GM12878 (cell line): ENCODE measurements at regions of chr6 and their contacts with region 1.

Region 1: GRCh38 chr6:7086488-7086887 is 21.3 kb upstream of the RREB1 start:
- DNase-seq: peak; percentile 66
- ATAC-seq: peak; percentile 86
- H3K4me3 ChIP-seq: peak overlapping the region; percentile 48
- H3K27ac ChIP-seq: peak overlapping the region; percentile 38
- H3K4me1 ChIP-seq: peaks cover 18% of the 10 kb centered on the region
- H3K27me3 ChIP-seq: no peaks in the 10 kb centered on the region
- CTCF ChIP-seq: peak in 2 of 3 experiments; percentile 43 to 44; a peak in 3 of 6 replicates
- EP300 ChIP-seq: 0 out of 4 replicates have a peak, but pooled peaks of 1 of the 2 experiments have one; percentile 9
- POLR2A ChIP-seq: no peak
- RAD21 ChIP-seq: peak; percentile 72

Region 2: GRCh38 chr6:6724539-6725467 is 361.7 kb before region 1 on chr6:
- CTCF ChIA-PET with region 1: no interaction called
- POLR2A ChIA-PET with region 1: no interaction called
- RAD21 ChIA-PET with region 1: interaction called, 10 read pairs
- SMC1A ChIA-PET with region 1: interaction called, 10 read pairs
- in situ Hi-C with region 1: no loop called
- intact Hi-C with region 1: no loop called
- DNase-seq: no peak
- ATAC-seq: peak; percentile 91
- H3K4me3 ChIP-seq: peak overlapping the region; percentile 37; the same call in 1 of the 2 replicates
- H3K27ac ChIP-seq: no peak overlapping the region
- H3K4me1 ChIP-seq: peaks cover 11% of the 10 kb centered on the region
- H3K27me3 ChIP-seq: no peaks in the 10 kb centered on the region
- CTCF ChIP-seq: peak; percentile 65 to 82 (median 70)
- EP300 ChIP-seq: no peak
- POLR2A ChIP-seq: no peak
- RAD21 ChIP-seq: peak; percentile 87

Region 3: DNA sequence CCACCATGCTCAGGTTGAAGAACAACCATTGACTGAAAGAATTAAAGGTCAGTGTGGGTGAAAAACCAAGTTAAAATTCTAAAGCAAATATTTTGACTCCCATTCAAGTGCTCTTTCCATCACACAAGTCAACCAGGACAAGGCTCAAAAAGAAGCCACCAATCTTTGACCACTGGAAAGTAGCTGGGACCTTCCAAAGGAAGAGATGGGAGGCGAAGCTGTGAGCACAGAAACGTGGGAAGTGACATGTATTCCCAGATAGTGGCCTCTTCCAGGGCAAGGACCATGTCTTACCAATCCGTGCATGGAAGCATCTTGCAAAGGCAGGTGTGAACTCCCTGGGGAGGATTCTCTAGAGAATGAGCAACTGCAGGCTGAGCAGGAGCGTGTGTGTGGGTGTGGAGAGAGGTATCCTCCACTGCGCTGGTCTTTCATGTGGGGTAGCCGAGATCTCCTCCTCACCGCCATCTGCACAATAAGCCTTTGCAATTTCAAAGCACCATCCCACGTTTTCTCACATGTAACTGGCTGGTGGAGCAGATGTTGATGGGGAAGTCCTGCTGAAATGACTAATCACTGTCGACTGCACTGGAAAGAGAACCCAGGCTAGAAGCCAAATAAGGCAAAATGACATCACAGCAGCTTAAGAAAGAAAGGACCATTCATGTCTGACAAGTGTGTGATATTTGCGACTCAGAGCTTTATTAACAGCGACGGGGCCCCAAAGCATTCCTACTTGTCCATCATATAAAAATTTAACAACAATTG is 168.1 kb before region 1 on chr6:
- CTCF ChIA-PET with region 1: interaction called, 4 read pairs
- POLR2A ChIA-PET with region 1: no interaction called
- RAD21 ChIA-PET with region 1: interaction called, 8 read pairs
- SMC1A ChIA-PET with region 1: interaction called, 7 read pairs
- in situ Hi-C with region 1: no loop called
- intact Hi-C with region 1: loop called (anchors 2 kb)
- DNase-seq: peak; percentile 91
- ATAC-seq: peak; percentile 96
- H3K4me3 ChIP-seq: no peak overlapping the region
- H3K27ac ChIP-seq: peak overlapping the region; percentile 30; the same call in 1 of the 2 replicates
- H3K4me1 ChIP-seq: peaks cover 27% of the 10 kb centered on the region
- H3K27me3 ChIP-seq: no peaks in the 10 kb centered on the region
- CTCF ChIP-seq: no peak
- EP300 ChIP-seq: peak; percentile 99
- POLR2A ChIP-seq: no peak
- RAD21 ChIP-seq: peak; percentile 31; the same call in 1 of the 2 replicates

Region 4: GRCh38 chr6:7107578-7108195 is 21.2 kb after region 1 on chr6 and contains the start of gene RREB1:
- CTCF ChIA-PET with region 1: interaction called, 11 read pairs
- POLR2A ChIA-PET with region 1: interaction called, 7 read pairs
- RAD21 ChIA-PET with region 1: interaction called, 24 read pairs
- SMC1A ChIA-PET with region 1: interaction called, 28 read pairs
- in situ Hi-C with region 1: no loop called
- intact Hi-C with region 1: no loop called
- DNase-seq: no peak
- ATAC-seq: peak; percentile 76
- H3K4me3 ChIP-seq: peak within 1 kb of the TSS; percentile 97
- H3K27ac ChIP-seq: peak within 1 kb of the TSS; percentile 94
- H3K4me1 ChIP-seq: peaks cover 5% of the 10 kb centered on the region
- H3K27me3 ChIP-seq: no peaks in the 10 kb centered on the region
- CTCF ChIP-seq: no peak
- EP300 ChIP-seq: no peak
- POLR2A ChIP-seq: peak; percentile 33
- RAD21 ChIP-seq: peak; percentile 1; the same call in 1 of the 2 replicates
- polyA plus RNA-seq, gene RREB1: 1.9 to 2.1 TPM

Region 5: DNA sequence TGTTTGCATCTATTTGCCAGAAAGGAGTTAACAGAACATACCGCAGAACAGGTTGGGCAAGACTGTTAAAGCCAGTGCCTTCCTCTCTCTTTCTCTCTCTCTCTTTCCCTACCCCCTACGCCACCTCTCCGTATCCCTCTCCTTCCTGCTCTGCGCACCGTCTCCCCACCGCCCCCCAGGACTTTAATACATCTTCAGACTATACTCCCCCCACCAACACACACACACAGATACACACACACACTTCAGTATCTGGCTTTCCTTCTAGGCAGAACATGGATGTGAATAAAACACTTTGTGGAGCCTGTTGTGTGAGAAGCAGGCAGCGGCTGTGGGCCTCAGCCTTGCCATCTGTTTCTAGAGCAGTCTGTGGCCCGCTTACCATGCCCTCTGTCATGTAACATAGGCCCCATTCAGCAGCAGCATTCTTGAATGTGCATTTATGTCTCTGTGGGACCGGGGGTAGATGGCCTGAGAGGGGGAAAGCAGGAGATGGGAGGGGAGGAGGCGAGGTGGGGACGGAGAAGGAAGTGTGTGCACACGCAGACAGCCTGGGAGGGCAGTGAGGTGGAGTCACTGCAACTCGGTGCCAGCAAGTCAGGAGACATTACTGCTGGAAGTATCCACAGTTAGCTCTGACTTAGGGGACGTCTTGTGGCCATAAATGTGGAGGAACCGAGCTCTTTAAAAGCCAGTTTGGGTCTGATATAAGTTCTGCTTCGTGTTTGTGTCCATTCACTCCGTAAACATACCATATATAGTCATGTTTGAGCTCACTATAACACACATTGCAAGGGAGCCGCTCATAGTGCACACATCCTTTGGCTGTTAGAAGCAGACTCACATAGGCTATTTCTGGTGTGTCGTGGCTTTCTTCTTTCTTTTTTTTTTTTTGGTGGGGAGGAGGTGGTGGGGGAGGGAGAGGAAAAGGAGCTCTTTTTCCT is 59.7 kb after region 1 on chr6:
- CTCF ChIA-PET with region 1: interaction called, 5 read pairs
- POLR2A ChIA-PET with region 1: no interaction called
- RAD21 ChIA-PET with region 1: interaction called, 11 read pairs
- SMC1A ChIA-PET with region 1: interaction called, 9 read pairs
- in situ Hi-C with region 1: no loop called
- intact Hi-C with region 1: no loop called
- DNase-seq: no peak
- ATAC-seq: peak; percentile 75
- H3K4me3 ChIP-seq: peak overlapping the region; percentile 63
- H3K27ac ChIP-seq: peak overlapping the region; percentile 96
- H3K4me1 ChIP-seq: peaks cover 67% of the 10 kb centered on the region
- H3K27me3 ChIP-seq: no peaks in the 10 kb centered on the region
- CTCF ChIP-seq: no peak
- EP300 ChIP-seq: no peak
- POLR2A ChIP-seq: peak; percentile 68
- RAD21 ChIP-seq: no peak